ENCODE measurements at regions of chr12 and their contacts with region 1.

Region 1: DNA sequence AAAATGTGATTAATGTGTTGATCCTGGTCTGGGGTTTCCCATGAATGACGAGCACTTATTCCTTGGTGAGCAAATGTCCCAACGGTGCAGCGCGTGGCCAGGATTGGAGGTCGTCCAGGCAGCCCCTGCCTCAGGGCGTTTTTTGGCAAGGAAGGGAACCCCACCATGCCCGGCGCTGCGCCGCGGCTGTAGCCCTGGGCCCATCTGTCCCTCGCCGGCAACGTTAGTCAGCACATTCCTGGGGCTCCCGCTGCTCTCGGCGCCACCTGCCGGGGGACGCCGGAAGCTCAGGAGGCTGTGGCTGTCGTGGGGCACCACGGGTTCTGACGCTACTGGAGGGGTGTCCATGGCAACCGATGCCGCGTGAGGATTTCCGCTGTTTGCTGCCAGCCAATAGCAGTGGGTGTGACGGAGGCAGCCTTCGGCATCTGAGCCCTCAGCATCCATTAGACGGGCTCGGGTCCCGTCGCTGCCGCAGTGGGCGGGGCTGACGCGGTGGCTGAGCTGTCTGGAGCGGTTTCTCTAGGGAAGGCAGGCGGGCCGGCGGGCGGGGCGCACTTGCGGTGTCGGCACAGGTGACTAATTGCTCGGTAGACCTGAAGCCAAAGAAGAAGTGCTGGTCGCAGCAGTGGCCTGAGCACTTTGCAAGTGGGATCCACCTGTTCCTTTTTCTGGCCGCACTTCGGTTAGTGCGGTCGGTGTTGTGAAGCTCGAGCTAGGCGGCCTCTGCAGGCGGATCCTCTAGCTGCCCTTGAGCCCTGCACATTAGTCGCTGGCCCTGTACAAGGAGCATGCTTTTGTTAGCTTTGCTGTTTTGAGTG is 29.5 kb downstream of the RAB35 start:
- DNase-seq: peak; percentile 99
- CTCF ChIP-seq: peak; percentile 98

Region 2: GRCh38 chr12:120100435-120101029 is 13.5 kb after region 1 on chr12:
- CTCF ChIA-PET with region 1: interaction called, 14 read pairs
- POLR2A ChIA-PET with region 1: interaction called, 3 read pairs
- DNase-seq: no peak
- CTCF ChIP-seq: no peak

Region 3: DNA sequence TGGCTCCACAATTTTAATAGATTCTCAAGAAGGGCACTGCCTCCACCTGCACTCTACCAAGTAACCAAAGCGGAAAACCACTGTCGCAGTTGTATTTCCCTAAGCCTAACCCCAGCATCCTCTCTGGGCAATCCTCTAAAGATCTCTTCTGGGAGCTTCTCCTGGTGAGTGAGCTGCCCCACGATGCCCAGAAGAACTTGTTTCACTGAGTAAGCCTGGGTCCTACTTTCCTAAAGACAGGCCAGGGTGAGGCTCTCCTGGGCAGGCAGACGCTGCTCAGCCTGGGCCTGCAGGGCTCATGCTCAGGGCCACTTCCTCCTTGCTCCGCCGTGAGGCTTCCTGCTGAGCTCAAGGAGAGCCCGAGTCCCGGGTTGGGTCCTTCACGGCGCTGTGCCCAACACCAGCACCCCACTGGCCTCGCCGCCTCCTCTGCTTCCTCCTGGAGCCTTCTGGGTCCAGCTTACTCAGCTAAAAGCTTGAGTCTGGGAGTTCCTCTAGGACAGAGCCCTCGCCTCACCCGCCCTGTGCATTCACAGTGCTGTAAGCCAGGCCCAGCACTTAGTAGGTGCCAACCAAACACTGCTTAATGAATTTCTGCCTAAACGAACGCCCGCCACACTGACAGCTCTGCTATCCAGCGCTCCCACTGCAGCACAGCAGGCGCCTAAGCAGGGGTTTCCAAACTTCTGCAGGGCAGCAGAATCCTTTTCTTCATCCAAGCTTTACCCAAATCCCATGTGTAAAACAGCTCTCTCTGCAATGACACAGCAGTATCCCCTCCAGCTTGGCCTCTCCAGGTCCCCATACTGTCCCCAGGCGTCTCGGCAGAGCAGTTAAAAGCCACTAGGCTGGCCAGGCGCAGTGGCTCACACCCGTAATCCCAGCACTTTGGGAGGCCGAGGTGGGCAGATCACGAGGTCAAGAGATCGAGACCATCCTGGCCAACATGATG is 23.8 kb after region 1 on chr12:
- CTCF ChIA-PET with region 1: interaction called, 14 read pairs
- POLR2A ChIA-PET with region 1: no interaction called
- DNase-seq: peak; percentile 71
- CTCF ChIP-seq: peak; percentile 14

Region 4: GRCh38 chr12:120514002-120514401 is 427.0 kb after region 1 on chr12:
- CTCF ChIA-PET with region 1: no interaction called
- POLR2A ChIA-PET with region 1: no interaction called
- DNase-seq: no peak
- CTCF ChIP-seq: no peak

Measured in GM10248 (cell line).